Activated CD4-positive, alpha-beta memory T cell treated with anti-CD3 and anti-CD28 coated beads for 36 hours (primary cell): ENCODE measurements at regions of chrX and their contacts with region 1.

Region 1: DNA sequence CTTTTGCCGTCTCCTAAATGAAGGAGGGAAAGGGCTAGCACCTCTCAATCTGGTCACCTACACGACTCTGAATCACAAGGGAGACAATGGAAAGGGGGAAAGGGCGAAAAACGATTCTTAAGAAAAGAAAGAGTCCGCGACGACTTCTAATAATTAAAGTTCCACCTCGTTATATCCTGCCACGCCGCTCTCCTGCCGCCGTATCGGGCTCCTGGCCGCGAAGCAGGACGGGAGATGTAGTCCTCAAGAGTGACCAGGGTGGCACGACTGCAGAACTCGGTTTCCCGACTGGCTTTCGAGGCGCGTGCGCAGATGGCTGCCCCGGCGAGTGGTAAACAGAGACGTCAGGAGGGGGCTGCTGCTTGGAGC is at the start of gene FOXO4:
- DNase-seq: peak; percentile 92
- H3K4me3 Mint-ChIP-seq: peak within 1 kb of the TSS; percentile 84
- H3K27ac Mint-ChIP-seq: peak within 1 kb of the TSS; percentile 85
- H3K4me1 Mint-ChIP-seq: peaks cover 23% of the 10 kb centered on the region
- H3K27me3 Mint-ChIP-seq: no peaks in the 10 kb centered on the region
- total RNA-seq, gene FOXO4: 8.7 to 10.7 TPM

Region 2: DNA sequence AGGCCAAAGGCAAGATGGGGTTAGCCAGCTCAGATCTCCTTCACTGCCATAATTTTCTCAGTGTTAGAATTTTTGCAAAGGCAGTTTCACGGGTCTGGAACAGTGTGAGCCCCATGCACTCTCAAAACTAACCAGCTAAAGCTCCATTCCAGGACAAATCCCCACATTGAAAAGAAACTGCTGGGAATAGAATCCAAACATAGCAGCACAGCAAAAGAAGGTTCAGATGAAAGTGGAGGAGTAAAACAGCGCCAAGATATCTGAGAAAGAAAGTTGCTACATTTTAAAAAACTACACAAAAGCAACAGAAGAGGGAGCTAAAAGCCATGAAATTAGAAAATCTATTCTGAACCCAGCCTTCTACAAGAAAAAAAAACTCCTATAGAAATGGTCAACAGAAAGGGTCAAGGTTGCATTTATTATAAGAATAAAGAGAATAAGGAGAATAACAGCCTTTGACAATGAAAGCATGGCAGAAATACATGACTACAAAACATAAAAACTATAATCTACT is 125.0 kb before region 1 on chrX:
- CTCF ChIA-PET with region 1: no interaction called
- POLR2A ChIA-PET with region 1: no interaction called
- intact Hi-C with region 1: no loop called
- DNase-seq: no peak
- H3K4me3 Mint-ChIP-seq: no peak overlapping the region
- H3K27ac Mint-ChIP-seq: no peak overlapping the region
- H3K4me1 Mint-ChIP-seq: peaks cover 6% of the 10 kb centered on the region
- H3K27me3 Mint-ChIP-seq: no peaks in the 10 kb centered on the region

Region 3: DNA sequence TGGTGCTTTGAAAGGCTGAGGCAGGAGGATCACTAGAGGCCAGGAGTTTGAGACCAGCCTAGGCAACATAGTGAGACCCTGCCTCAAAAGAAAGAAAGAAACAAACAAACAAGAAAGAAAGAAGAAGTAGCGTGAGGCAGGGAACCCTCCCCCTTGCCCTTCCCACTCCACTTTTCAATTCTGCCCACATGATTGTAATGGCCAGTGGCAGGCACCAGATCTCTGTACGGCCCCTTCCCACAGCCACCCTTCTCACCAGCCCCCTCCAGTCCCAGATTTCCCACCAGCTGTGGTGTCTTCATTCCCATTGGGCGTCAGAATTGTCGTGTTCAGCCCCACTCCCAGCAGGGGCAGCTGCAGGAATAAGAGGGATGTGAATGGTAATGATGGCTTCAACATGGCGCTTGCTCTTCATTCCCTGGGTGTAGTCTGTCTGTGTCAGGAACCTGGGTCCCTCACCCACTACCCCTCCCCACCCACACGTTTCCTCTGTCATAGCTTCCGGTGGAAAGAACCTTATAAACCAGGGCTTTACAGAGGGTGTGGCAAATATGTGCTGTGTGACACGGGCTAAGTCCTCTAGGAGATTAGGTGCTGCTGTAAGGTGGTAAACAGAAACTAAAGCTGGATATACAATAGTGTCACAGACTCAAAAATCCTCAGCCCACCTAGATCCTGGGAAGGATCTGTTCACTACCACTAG is 15.8 kb after region 1 on chrX and contains the start of gene IL2RG:
- CTCF ChIA-PET with region 1: interaction called, 12 read pairs
- POLR2A ChIA-PET with region 1: interaction called, 28 read pairs
- intact Hi-C with region 1: loop called (anchors 1 kb)
- DNase-seq: peak; percentile 85
- H3K4me3 Mint-ChIP-seq: peak within 1 kb of the TSS; percentile 99
- H3K27ac Mint-ChIP-seq: peak within 1 kb of the TSS; percentile 98
- H3K4me1 Mint-ChIP-seq: peaks cover 38% of the 10 kb centered on the region
- H3K27me3 Mint-ChIP-seq: no peaks in the 10 kb centered on the region
- total RNA-seq, gene IL2RG: 289 to 290 TPM

Region 4: GRCh38 chrX:71118032-71118984 is 22.8 kb after region 1 on chrX and contains the start of gene MED12:
- CTCF ChIA-PET with region 1: interaction called, 11 read pairs
- POLR2A ChIA-PET with region 1: interaction called, 6 read pairs
- intact Hi-C with region 1: loop called (anchors 1 kb)
- DNase-seq: peak; percentile 90
- H3K4me3 Mint-ChIP-seq: peak within 1 kb of the TSS; percentile 75
- H3K27ac Mint-ChIP-seq: peak within 1 kb of the TSS; percentile 89
- H3K4me1 Mint-ChIP-seq: peaks cover 38% of the 10 kb centered on the region
- H3K27me3 Mint-ChIP-seq: no peaks in the 10 kb centered on the region
- total RNA-seq, gene MED12: 46.9 to 50.1 TPM

Region 5: GRCh38 chrX:71128915-71129765 is 33.6 kb after region 1 on chrX:
- CTCF ChIA-PET with region 1: interaction called, 33 read pairs
- POLR2A ChIA-PET with region 1: no interaction called
- intact Hi-C with region 1: loop called (anchors 1 kb)
- DNase-seq: peak; percentile 81
- H3K4me3 Mint-ChIP-seq: no peak overlapping the region
- H3K27ac Mint-ChIP-seq: peak overlapping the region; percentile 83
- H3K4me1 Mint-ChIP-seq: peaks cover 12% of the 10 kb centered on the region
- H3K27me3 Mint-ChIP-seq: no peaks in the 10 kb centered on the region